ENCODE measurements at regions of chr3 and their contacts with region 1.

Region 1: DNA sequence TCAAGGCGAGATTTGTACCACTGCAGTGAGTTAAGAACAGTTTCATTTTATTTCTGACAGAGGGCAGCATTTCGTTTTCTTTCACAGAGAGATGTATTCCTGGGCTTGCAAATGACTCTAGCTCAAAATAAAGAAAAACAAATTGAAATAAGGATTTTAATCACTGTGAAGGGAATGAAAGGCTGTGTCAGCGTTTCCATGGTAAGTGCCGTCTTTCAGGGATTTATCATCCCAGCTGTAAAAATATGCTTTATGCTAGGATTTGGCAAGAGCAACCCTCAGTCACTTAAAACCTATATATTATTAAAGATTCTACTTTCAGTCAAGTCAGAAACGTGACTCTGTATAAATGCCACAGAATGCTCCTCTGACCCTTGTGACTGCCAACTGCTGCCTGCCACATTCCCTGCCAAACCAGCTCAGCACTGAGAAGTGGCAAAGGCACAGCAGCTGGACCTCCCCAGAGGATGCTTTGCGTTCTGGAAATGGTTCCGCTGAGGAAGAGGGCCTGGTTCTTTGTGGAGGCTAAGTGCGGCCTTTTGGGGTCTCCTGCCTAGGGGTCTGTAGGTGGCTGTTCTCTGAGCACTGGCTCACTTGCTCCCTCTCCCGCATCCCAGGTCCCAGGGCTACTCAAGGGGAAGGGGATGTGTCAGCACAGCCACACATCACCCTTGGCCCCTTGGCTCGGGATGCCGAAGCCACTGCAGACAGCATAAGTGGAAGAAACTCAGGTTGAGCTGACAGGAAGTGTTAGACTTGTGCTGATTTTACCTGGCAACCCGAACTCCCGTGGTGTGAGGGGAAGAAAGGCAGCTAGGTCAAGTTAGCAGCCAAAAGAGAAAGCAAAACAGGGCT is 56.6 kb upstream of the POMGNT2 start:
- DNase-seq: no peak
- ATAC-seq: peak; percentile 82

Region 2: DNA sequence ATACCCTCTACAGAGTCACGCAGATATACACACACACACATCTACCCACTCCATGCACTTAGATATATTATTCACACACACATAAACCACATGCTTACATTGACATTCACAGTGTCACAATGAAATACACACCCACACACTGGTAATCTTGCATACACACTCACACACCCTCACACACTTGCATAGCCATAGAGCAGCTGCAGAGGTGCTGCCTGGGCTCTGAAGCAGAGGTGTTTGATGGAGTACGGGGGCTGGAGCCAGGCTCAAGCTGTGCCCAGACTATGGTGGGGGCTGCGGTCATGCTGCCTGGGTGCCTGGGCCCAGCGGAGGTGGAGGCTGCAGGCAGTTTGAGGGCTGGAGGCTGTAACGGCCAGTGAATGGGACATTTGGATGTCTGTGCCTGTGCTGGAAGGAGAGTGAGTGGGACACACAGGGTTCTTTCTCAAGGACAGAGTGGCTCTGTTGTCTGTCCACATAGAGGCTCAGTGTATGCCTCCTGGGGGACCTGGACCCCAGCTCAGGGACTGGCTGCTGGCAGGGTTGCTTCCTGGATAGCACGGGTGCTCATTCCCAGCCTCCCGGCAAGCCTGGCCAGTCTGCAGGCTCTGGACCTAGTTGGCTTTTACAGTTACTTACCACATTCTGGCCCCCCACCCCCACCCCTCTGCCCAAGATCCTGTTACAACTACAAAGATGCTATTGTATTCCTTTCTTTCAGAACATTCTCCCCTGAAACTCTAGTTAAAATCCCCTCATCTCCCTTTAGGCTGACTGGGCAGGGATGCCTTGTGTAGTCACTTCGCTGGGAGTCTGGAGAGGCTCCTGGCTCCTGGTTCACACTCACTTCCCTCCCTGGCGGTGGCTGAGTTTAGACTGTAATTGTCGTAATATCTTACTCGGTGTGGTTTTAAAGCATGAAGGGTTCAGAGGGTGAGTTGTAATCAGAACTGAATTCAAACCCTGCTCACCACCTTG is 170.8 kb before region 1 on chr3:
- intact Hi-C with region 1: no loop called
- DNase-seq: peak; percentile 61
- ATAC-seq: peak; percentile 49

Region 3: DNA sequence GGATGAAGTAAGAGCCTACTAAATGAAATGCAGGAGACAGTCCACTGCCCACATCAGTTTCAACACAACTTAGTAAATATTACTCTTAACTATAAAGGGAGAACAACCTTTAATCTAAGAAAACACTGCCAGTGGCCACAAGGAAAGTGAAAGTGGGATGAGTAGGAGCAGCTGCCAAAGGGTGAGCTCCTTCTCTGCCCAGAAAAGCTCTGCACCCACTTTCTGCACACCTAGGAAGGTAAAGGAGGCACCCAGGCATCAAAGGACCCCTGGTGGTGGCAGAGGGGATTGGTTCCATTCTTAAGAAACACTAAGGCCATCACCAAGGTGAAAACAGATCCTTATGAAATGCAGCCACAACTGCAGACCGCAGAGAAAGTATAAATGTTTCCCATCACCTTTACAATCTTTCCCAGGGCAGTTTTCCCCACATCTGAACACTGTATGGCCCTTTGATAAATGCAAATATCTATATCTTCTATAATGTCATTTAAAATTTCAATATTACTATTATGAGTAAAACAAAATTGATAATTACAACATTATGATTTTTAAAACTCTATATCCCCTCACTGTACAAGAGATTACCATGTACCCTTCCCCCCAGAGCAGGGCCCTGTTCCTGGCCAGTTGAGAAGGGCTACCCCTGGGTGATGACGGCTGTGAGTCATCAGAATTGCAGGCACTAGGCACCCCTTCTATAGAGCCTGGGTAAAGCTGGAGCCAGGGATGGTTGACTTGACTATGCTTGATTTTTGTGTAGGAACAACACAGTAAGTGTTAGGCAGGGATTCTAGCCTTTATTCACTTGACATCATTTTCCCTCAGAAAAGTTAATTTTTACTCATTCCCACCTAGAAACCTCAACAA is 215.8 kb after region 1 on chr3:
- intact Hi-C with region 1: loop called (anchors 10 kb)
- DNase-seq: no peak
- ATAC-seq: peak; percentile 48

Region 4: GRCh38 chr3:43405888-43406642 is 243.6 kb after region 1 on chr3:
- intact Hi-C with region 1: no loop called
- DNase-seq: peak; percentile 48
- ATAC-seq: peak; percentile 89